Activated naive CD4-positive, alpha-beta T cell treated with anti-CD3 and anti-CD28 coated beads, Interleukin-2, amount 10 ng/mL, durations not matched to agents 7 days and 5 days (primary cell): ENCODE measurements at regions of chr1 and their contacts with region 1.

Region 1: GRCh38 chr1:156445789-156446263 is 54.7 kb downstream of the MEF2D start:
- DNase-seq: peak; percentile 85
- H3K4me3 Mint-ChIP-seq: no peak overlapping the region
- H3K27ac Mint-ChIP-seq: peak overlapping the region; percentile 38
- H3K4me1 Mint-ChIP-seq: peaks cover 6% of the 10 kb centered on the region
- H3K27me3 Mint-ChIP-seq: peaks cover 75% of the 10 kb centered on the region

Region 2: GRCh38 chr1:156198831-156199349 is 246.9 kb before region 1 on chr1:
- CTCF ChIA-PET with region 1: no interaction called
- DNase-seq: no peak
- H3K4me3 Mint-ChIP-seq: no peak overlapping the region
- H3K27ac Mint-ChIP-seq: peak overlapping the region; percentile 80
- H3K4me1 Mint-ChIP-seq: peaks cover 66% of the 10 kb centered on the region
- H3K27me3 Mint-ChIP-seq: no peaks in the 10 kb centered on the region

Region 3: GRCh38 chr1:156406251-156406650 is 39.6 kb before region 1 on chr1:
- CTCF ChIA-PET with region 1: interaction called, 12 read pairs
- DNase-seq: no peak
- H3K4me3 Mint-ChIP-seq: no peak overlapping the region
- H3K27ac Mint-ChIP-seq: no peak overlapping the region
- H3K4me1 Mint-ChIP-seq: no peaks in the 10 kb centered on the region
- H3K27me3 Mint-ChIP-seq: peaks cover 97% of the 10 kb centered on the region

Region 4: GRCh38 chr1:156435545-156436141 is 10.2 kb before region 1 on chr1:
- CTCF ChIA-PET with region 1: interaction called, 15 read pairs
- DNase-seq: peak; percentile 50
- H3K4me3 Mint-ChIP-seq: peak overlapping the region; percentile 71
- H3K27ac Mint-ChIP-seq: peak overlapping the region; percentile 56
- H3K4me1 Mint-ChIP-seq: peaks cover 29% of the 10 kb centered on the region
- H3K27me3 Mint-ChIP-seq: peaks cover 100% of the 10 kb centered on the region

Region 5: DNA sequence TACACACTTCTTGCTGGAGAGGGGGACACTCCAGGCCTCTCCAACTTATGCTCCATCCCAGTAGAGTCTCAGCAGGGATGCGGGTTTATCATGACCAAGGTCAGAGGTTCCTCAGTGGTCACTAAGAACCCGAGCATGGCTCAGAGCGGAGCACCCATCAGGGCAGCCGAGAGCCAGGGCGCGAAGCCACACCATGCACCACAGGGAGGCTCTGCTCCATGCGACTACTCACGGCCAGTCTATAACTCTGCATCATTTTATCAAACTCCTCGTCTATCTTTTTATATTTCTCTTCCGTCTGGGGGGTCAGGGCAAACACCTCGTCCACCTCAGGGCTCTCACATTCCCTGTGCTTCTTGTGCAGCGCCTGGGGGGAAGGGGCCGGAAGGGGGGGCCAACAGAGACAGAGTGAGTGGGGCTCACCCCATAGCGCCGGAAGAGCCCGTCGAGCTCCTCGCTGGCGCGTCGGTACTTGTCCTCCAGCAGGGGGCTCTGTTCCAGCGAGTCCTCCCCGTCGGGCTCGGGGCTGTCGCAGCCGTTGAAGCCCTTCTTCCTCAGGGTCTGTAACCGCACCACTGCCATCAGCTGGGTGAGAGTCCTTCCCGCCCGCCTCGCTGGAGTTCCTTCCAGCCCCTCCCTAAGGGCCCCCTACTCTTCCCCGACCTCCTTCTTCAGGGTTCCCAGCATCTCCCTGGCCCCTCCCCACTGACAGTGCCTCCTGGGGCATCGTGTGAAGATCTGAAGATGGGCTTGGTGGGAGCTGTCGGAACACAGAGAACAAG is 34.8 kb after region 1 on chr1:
- CTCF ChIA-PET with region 1: interaction called, 10 read pairs
- DNase-seq: peak; percentile 84
- H3K4me3 Mint-ChIP-seq: no peak overlapping the region
- H3K27ac Mint-ChIP-seq: peak overlapping the region; percentile 72
- H3K4me1 Mint-ChIP-seq: peaks cover 30% of the 10 kb centered on the region
- H3K27me3 Mint-ChIP-seq: no peaks in the 10 kb centered on the region

Region 6: DNA sequence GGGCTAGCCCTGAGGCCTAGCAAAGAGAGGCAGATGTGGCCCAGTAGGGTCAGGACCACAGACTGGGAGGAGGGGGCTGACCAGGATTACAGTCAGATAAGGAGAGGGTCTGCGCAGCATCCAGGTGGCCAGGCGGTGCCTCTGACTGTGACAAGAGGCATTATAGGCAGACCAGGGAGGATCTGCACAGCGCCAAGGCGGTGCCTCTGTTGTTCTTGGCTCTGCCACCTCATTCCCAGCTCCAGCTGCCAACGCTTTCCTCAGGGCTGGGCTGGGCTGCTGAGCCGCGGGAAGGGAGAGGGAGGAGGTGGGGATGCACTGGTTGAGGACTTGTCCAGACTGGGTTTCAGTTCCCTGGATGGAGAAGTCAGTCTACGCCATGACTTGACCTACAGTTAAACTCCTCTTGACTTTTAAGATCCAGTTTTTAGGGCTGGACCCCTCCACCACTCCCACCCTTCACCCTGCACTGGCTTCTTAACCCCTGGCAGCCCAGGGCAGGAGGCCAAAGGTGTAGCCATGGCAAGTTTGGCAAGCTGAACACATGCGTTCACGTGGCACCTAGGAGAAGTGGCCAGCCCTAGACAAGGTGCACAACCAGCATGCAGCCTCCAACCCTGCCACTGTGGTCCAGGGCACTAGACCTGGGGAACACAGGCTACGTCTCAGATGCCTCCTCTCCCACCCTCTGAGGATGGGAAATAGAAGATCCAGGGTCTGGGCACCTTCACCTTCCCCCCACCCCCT is 264.1 kb after region 1 on chr1:
- CTCF ChIA-PET with region 1: no interaction called
- DNase-seq: no peak
- H3K4me3 Mint-ChIP-seq: no peak overlapping the region
- H3K27ac Mint-ChIP-seq: no peak overlapping the region
- H3K4me1 Mint-ChIP-seq: peaks cover 24% of the 10 kb centered on the region
- H3K27me3 Mint-ChIP-seq: peaks cover 36% of the 10 kb centered on the region